ENCODE measurements at regions of chr6 and their contacts with region 1.

Region 1: GRCh38 chr6:134822920-134823709 is 126.8 kb downstream of the ALDH8A1 start:
- DNase-seq: peak; percentile 49
- ATAC-seq: peak; percentile 74

Region 2: GRCh38 chr6:134161036-134161435 is 662.1 kb before region 1 on chr6:
- intact Hi-C with region 1: loop called (anchors 5 kb)
- DNase-seq: no peak
- ATAC-seq: no peak

Region 3: DNA sequence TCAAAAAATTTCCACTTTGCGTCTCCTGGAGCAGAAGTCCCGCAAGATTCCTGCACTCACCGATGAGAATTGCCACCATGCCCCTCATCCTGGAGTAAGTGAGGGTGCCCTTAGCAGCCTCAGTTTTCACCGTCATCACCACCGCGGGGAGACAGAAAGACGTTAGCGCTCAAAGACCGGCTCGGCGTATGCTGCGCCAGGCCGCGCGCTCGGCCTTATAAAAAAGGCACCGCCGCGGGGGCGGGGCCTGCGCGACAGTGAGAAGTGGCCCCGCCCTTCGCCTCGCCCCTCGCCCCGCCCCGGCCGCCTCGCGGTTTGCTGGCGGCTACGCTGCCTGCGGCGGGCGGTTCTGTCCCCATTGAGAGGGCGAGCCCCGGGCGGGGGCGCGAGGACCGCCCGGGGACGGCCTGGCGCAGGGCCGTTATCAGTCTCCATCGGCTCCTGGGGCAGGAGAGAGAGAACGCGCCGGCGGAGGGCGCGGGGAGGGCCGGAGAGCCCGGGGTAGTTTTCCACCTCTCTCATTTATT is 648.4 kb before region 1 on chr6:
- intact Hi-C with region 1: loop called (anchors 5 kb)
- DNase-seq: peak; percentile 97
- ATAC-seq: peak; percentile 93

Region 4: GRCh38 chr6:134774201-134774638 is 48.9 kb before region 1 on chr6:
- intact Hi-C with region 1: no loop called
- DNase-seq: no peak
- ATAC-seq: no peak

Region 5: GRCh38 chr6:134882426-134883038 is 59.4 kb after region 1 on chr6:
- intact Hi-C with region 1: loop called (anchors 5 kb)
- DNase-seq: peak; percentile 73
- ATAC-seq: peak; percentile 74

Measured in left ventricle myocardium superior (tissue), 1 donor.